ENCODE measurements at regions of chr10 and their contacts with region 1.

Region 1: DNA sequence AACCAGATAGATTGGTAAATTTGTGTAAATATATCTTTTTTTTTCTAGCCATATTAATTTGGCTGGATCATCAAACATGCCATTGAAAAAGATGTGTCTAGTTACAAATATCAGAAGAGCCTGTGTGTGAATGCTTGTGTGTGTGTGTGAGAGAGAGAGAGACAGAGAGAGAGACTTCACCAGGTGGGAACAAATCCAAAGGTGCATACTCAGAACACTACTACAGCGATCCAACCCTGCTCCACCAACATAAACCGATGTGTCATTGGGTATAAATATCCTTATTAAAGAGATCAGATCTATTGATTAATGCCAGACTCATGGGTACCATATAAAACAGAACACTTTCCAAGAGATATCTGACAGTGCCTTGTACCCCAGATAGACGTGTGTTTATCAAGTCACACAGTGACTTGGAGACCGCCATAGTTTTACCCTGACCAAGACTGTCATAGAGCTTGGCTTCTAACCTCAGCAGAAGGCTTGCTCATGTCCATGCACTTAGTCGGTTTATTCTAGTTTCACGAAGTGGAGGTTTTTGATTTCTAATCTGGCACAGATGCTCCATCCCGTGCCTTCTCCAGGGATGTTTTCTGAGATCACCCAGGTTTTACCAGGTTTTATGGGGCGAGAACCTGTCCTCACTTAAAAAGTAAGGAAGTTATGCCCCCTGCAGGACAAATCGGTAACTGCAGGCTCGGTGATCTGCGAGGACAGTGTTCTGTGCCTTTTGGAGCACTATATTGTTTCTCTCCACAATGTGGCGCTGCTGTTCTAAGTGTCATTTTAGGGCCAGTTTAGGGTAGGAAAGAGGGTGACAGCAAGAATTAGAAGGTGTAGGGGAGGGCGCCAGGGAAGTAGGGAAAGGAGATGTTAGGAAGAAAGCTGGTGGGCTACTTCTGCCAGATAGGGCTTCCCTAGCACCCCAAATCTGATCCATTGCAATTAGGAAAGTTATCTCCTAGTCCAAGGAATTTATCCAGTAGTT is 29.3 kb upstream of the WNT8B start:
- DNase-seq: peak; percentile 80 to 84
- H3K4me3 ChIP-seq: no peak overlapping the region
- H3K27ac ChIP-seq: no peak overlapping the region
- H3K4me1 ChIP-seq: no peaks in the 10 kb centered on the region
- H3K27me3 ChIP-seq: no peaks in the 10 kb centered on the region
- CTCF ChIP-seq: peak; percentile 97

Region 2: DNA sequence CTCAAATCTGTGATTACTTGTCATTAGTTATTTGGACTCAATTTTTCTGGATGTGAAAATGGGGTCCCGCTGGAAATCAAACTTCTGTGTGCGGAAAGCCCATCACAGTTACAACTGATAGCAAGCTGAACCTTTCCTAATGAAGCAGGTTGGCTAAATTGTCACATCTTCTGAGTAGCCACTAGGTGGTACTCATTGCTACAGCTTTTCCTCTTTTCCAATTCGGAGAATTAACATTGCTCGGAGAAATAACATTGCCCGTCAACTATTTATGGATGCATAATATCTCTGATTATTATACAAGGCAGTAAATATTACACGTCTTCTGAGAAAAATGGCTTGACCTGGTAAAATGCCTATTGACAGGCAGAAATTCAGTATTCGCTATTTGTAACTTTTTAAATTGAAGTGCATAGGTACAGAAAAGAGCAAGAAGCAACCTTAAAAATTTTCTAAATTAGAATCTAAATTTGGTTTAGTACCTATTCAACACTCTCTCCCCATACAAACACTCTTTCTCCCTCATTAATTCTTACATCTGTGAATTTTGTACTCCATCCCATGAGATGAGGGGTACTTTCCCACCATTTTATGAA is 129.7 kb before region 1 on chr10:
- CTCF ChIA-PET with region 1: no interaction called
- POLR2A ChIA-PET with region 1: no interaction called
- intact Hi-C with region 1: loop called (anchors 1 kb)
- DNase-seq: peak in 1 of 2 experiments; percentile 37
- H3K4me3 ChIP-seq: no peak overlapping the region
- H3K27ac ChIP-seq: no peak overlapping the region
- H3K4me1 ChIP-seq: no peaks in the 10 kb centered on the region; the same call in 1 of the 2 replicates
- H3K27me3 ChIP-seq: no peaks in the 10 kb centered on the region
- CTCF ChIP-seq: peak; percentile 64

Region 3: DNA sequence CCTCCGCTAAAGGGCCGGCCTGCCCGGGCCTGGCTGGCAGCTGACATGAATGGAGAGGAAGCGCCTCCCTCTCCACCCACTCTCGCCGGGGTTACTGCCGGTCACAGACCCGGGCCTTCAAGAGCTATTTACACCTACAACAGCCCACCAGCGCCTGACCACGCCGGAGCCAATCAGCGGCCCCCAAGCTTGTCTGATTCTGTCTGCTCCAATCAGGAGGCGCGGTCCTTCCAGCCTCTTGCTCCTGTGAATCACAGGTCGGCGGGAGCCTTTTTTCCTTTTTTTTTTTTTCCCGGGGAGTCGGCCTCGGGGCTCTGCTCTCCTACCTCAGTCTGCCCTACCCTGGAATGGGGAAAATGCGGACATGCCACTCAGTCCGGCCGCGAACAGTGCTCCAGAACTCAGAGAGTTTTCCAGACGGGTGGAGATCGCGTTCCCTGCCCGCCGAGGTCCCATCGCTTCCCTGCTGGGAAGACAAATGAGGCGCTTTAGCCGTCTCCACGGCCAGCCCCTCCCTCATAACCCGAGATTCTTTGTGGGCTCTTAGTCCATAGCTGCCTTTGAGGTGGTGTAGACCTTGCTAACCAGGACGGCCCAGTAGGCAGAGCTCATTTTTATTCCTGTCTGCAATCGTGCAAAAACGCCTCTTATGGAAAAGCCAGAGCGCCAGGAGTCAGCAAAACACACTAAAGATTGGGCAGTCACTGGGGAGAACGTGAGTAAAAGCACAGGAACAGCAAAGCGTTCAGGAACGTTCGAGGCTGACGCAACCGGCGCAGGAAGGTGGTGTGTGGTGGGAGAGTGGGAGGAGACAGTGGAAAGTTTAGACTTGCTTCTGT is 60.0 kb before region 1 on chr10:
- CTCF ChIA-PET with region 1: no interaction called
- POLR2A ChIA-PET with region 1: no interaction called
- intact Hi-C with region 1: loop called (anchors 2 kb)
- DNase-seq: peak; percentile 95 to 98
- H3K4me3 ChIP-seq: peak overlapping the region; percentile 88
- H3K27ac ChIP-seq: peak overlapping the region; percentile 100
- H3K4me1 ChIP-seq: peaks cover 59% of the 10 kb centered on the region
- H3K27me3 ChIP-seq: no peaks in the 10 kb centered on the region
- CTCF ChIP-seq: no peak

Region 4: DNA sequence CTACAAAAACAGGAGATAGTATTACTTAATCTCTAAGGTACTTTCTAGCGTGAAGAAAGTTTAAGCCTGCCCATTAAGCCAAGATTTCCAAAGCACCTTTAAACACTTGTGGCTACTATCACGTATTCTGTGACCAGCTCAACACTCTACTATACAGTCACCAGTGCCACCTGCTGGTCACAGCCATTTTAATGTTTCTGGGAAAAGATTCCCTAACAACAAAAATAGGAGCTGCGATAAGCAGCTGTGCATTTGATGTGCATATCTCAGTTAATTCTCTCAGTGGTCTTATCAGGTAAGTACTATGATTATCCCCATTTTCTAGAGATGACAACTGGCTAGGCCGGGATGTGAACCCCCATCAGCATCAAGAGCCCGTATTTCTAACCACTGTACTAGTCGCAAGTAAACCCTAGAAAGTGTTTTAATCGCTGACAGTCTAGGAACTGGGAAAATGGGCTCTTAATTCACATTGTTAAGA is 85.3 kb after region 1 on chr10:
- CTCF ChIA-PET with region 1: interaction called, 4 read pairs
- POLR2A ChIA-PET with region 1: no interaction called
- intact Hi-C with region 1: loop called (anchors 1 kb)
- DNase-seq: peak; percentile 42 to 44
- H3K4me3 ChIP-seq: no peak overlapping the region
- H3K27ac ChIP-seq: no peak overlapping the region
- H3K4me1 ChIP-seq: no peaks in the 10 kb centered on the region
- H3K27me3 ChIP-seq: no peaks in the 10 kb centered on the region
- CTCF ChIP-seq: peak; percentile 75

Region 5: GRCh38 chr10:100625816-100626215 is 192.3 kb after region 1 on chr10:
- CTCF ChIA-PET with region 1: no interaction called
- POLR2A ChIA-PET with region 1: no interaction called
- intact Hi-C with region 1: no loop called
- DNase-seq: no peak
- H3K4me3 ChIP-seq: no peak overlapping the region
- H3K27ac ChIP-seq: no peak overlapping the region
- H3K4me1 ChIP-seq: no peaks in the 10 kb centered on the region
- H3K27me3 ChIP-seq: peaks cover 64% of the 10 kb centered on the region
- CTCF ChIP-seq: no peak

Region 6: DNA sequence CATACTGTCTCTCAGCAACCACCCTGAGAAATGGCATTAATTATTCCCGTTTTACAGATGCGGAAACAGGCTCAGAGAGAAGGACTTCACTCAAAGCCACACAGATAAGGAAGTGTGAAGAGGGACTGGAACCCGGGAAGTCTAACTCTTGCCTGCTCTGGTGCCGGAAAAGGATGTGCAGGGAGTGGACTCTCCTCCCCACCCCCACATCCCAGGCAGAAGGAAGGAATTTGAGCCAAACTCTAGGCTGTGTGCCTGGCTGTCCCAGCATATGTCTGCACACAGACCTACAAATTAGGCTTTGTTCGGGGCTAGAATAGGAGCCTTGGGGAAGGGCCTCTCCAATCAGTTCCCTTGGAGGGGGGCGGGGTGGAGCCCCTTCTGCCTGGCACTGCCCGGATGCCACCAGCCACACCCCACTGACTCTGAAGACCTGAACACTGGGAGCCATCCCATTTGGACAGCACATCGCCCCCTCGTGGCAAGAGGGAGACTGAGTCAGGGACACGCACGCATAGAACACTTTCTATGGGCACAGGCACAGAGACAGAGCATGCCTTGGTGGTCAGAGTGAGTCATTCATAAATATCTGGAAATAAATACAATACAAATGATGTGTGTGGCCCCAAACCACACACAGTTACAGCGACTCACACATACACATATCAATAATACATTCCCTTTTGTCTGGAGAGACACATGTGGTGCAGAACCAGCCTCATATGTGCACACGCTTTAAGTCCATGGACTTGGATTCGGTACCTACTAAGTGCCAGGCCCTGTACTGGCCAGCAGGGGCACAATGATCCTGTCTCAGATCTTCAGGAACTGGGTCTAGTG is 579.2 kb after region 1 on chr10:
- CTCF ChIA-PET with region 1: no interaction called
- POLR2A ChIA-PET with region 1: no interaction called
- intact Hi-C with region 1: loop called (anchors 10 kb)
- DNase-seq: peak; percentile 67 to 76
- H3K4me3 ChIP-seq: no peak overlapping the region
- H3K27ac ChIP-seq: no peak overlapping the region
- H3K4me1 ChIP-seq: peaks cover 5% of the 10 kb centered on the region
- H3K27me3 ChIP-seq: no peaks in the 10 kb centered on the region
- CTCF ChIP-seq: peak; percentile 78

Measured in PC-9 (cell line).